Left ventricle myocardium inferior (tissue), 1 donor: ENCODE measurements at regions of chr6 and their contacts with region 1.

Region 1: GRCh38 chr6:131909408-131910218 is 41.6 kb downstream of the CCN2 start:
- DNase-seq: peak; percentile 18
- H3K4me3 ChIP-seq: no peak overlapping the region
- H3K27ac ChIP-seq: no peak overlapping the region
- H3K4me1 ChIP-seq: no peaks in the 10 kb centered on the region
- H3K27me3 ChIP-seq: peaks cover 46% of the 10 kb centered on the region
- CTCF ChIP-seq: peak; percentile 93

Region 2: DNA sequence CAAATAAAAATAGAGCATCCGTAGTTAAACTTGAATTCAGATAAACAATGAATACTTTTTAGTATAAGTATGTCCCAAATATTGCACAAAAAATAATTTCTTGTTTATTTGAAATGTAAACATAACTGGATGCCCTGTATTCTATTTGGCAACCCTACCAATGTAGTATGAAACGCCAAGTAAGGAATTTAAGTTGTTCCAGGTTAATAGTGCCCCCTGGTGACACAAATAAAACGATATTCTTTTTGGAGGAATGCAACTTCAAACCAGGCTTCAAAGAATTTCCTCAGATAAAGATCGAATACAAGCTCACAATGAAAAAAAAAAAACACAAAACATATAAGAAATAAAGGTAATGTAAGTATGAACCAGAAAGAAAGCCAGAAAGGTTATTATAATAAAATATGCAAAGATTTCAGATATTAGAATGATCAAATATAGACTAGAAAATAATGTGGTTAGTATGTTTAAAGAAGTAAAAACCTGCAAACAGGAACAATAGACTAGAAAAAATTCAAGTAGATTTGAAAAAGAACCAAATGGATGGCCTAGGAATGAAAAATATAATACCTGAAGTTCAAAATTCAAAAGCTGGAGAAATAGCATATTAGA is 792.8 kb before region 1 on chr6:
- intact Hi-C with region 1: no loop called
- DNase-seq: no peak
- H3K4me3 ChIP-seq: no peak overlapping the region
- H3K27ac ChIP-seq: no peak overlapping the region
- H3K4me1 ChIP-seq: no peaks in the 10 kb centered on the region
- H3K27me3 ChIP-seq: no peaks in the 10 kb centered on the region
- CTCF ChIP-seq: peak; percentile 62

Region 3: GRCh38 chr6:131476362-131476761 is 433.3 kb before region 1 on chr6:
- intact Hi-C with region 1: no loop called
- DNase-seq: no peak
- H3K4me3 ChIP-seq: no peak overlapping the region
- H3K27ac ChIP-seq: no peak overlapping the region
- H3K4me1 ChIP-seq: no peaks in the 10 kb centered on the region
- H3K27me3 ChIP-seq: no peaks in the 10 kb centered on the region
- CTCF ChIP-seq: no peak

Region 4: DNA sequence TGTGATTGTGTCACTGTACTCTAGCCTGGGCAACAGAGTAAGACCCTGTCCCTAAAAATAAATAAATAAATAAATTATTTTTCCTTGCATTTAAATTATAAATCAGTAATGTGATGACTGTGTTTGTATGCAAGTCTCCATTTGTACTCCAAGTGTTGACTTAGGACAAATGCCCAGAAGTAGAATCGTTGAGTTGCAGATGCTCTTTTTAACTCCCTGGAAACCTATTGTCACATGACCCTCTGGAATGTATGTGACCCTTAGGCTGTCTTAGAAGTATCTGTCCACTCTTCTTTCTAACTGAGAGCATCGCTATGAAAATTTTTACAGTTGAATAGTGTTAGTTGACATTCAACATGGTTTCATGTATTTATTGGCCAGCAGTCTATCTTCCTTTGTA is 227.2 kb before region 1 on chr6:
- intact Hi-C with region 1: no loop called
- DNase-seq: no peak
- H3K4me3 ChIP-seq: no peak overlapping the region
- H3K27ac ChIP-seq: no peak overlapping the region
- H3K4me1 ChIP-seq: no peaks in the 10 kb centered on the region
- H3K27me3 ChIP-seq: no peaks in the 10 kb centered on the region
- CTCF ChIP-seq: no peak

Region 5: DNA sequence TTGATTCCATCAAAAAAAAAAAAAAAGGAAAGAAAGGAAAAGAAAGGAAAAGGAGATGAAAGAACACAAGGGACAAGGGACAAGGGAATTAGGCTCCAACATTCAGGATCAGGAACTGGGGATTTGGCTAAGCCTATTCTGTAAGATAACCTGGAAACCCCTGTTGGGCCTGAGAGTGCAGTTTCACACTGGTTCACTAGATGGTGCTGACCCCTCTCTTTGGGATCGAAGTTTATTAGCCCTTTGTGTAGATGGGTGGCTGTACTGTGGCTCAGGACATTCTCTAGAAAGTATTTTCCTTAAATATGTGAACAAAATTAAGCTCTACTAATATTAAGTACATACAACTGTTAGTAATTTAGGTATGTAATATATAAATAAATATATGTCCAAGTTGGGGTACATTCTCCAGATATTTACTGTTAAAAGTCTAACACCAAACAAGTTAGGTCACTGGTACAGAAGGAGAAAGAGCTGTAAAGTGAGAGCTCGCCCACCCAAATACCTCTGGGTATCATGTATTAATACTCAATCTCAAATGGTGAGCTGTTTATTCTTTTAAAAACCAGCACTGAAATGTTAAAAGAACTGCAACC is 214.7 kb before region 1 on chr6:
- intact Hi-C with region 1: loop called (anchors 5 kb)
- DNase-seq: peak; percentile 20
- H3K4me3 ChIP-seq: no peak overlapping the region
- H3K27ac ChIP-seq: no peak overlapping the region
- H3K4me1 ChIP-seq: no peaks in the 10 kb centered on the region
- H3K27me3 ChIP-seq: no peaks in the 10 kb centered on the region
- CTCF ChIP-seq: peak; percentile 84